CD4-positive, alpha-beta T cell (primary cell): ENCODE measurements at regions of chr11 and their contacts with region 1.

Region 1: DNA sequence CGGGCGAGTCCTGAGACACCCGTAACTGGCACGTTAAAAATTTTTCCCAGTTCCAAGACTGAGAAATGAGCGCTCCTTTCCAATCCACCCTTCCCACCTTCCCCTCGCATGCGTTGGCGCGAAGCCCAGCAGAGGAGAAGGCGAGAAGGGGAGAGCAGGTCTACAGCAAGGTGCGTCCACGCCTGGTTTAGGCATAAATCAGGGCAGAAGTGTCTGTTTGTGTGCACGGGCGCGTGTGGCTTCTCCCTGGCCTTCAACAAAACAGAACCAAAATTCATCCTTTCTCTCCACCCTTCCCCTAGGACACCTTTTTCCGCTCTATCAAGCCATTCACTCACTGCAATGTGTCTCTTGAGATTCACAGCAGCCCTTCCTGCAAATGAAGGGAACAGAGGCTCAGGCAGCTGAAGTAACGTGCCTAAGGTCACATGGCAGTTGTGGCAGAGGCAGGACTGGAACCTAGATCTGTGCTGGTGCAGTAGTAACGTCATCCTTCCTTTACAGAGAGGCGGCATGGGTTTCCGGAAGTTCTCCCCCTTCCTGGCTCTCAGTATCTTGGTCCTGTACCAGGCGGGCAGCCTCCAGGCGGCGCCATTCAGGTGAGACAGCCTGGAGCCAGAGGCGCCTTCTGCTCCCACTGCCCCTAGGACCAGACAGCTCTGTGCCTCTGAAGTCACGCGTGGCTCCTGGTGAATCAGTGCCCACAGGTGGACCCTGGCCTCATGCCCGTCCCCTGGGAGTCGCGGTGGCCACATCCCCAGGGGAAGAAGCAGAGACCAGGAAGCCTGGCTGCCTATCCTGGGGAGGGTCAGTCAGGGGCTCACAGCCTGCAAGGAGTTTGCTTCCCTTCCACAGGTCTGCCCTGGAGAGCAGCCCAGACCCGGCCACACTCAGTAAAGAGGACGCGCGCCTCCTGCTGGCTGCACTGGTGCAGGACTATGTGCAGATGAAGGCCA is 1.1 kb downstream of the CALCB start:
- DNase-seq: peak; percentile 71 to 88 (median 78)
- ATAC-seq: peak; percentile 93
- H3K4me3 ChIP-seq: peak overlapping the region; percentile 50
- H3K4me3 Mint-ChIP-seq: peak overlapping the region; percentile 88
- H3K27ac ChIP-seq: no peak overlapping the region
- H3K27ac Mint-ChIP-seq: no peak overlapping the region
- H3K4me1 ChIP-seq: peaks cover 25% of the 10 kb centered on the region
- H3K4me1 Mint-ChIP-seq: peaks cover 18% of the 10 kb centered on the region
- H3K27me3 ChIP-seq: peaks cover 22 to 23% of the 10 kb centered on the region in 2 experiments
- H3K27me3 Mint-ChIP-seq: peaks cover 39% of the 10 kb centered on the region
- CTCF ChIP-seq: peak; percentile 93

Region 2: DNA sequence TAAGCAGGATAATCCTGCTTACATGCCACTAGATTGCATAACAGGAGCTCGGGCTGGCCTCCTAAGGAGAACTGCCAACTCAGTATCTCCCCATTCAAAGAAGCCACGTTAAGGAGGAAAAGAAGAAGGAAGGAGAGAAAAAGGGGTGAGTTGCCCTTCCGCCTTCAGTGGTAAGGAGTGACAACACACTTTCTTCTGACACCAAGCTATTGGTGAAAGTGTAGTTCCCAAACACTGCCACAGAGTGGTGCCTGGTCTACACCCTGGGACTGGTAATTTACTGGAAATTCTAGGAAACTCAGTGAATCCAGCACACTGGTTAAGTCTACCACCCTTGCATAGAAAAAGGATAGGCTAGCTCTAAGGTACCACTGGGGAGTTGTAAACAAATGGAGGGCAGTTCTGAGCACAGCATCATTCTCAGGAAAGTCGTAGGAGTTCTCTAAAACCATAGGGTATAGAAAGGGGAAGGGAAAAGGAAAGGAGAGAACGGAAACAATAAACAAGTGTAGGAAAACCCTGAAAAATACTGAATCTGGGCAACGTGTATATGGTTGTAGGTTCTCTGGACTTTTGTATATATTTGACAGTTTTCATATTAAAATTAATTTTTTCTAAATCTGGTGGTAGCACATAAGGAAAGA is 773.7 kb before region 1 on chr11:
- CTCF ChIA-PET with region 1: no interaction called
- POLR2A ChIA-PET with region 1: no interaction called
- intact Hi-C with region 1: loop called in 1 of 2 experiments (anchors 5 kb)
- DNase-seq: peak in 13 of 14 experiments; percentile 13 to 68 (median 27)
- ATAC-seq: peak; percentile 94
- H3K4me3 ChIP-seq: no peak overlapping the region
- H3K4me3 Mint-ChIP-seq: no peak overlapping the region
- H3K27ac ChIP-seq: no peak overlapping the region
- H3K27ac Mint-ChIP-seq: no peak overlapping the region
- H3K4me1 ChIP-seq: peaks cover 5% of the 10 kb centered on the region
- H3K4me1 Mint-ChIP-seq: peaks cover 5% of the 10 kb centered on the region
- H3K27me3 ChIP-seq: no peaks in the 10 kb centered on the region
- H3K27me3 Mint-ChIP-seq: no peaks in the 10 kb centered on the region
- CTCF ChIP-seq: peak; percentile 60

Region 3: DNA sequence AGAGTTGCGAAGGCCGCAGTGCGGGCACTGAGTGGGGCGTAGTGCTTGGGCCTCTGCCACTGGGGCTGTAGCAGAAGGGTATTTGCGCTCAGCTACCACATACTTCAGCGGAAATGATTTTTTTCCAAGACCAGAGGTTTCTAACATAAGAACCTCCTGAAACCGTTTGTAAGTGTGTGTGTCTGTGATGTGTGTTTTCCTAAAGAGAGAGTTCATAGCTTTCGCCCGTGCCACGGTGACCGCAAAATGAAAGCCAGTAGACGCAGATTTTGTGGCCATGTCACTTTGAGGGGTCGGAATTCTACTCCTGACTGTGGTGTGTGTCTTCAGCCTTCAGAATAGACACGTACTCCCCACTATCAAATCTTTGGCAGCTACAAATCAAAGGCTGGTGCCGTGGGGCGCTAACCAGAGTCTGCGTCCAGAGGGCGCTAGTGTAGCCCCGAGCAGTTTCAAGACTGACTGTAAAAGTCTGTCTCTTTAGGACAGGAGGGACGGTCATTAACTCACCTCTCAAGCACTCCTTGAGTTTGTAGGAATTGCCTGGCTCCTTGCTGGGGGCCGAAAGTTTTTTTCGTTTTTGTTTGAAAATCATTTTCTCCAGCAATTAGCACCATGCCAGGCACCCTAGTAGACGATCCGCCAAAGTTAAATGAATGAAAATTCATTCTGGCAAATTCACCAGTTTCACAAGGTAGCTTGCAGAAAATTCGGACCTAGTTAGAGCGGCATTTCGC is 99.8 kb before region 1 on chr11:
- CTCF ChIA-PET with region 1: interaction called, 9 read pairs
- POLR2A ChIA-PET with region 1: no interaction called
- intact Hi-C with region 1: loop called in 1 of 2 experiments (anchors 5 kb)
- DNase-seq: peak; percentile 17 to 74 (median 55)
- ATAC-seq: peak; percentile 78
- H3K4me3 ChIP-seq: peak overlapping the region; percentile 48
- H3K4me3 Mint-ChIP-seq: peak overlapping the region; percentile 85
- H3K27ac ChIP-seq: no peak overlapping the region
- H3K27ac Mint-ChIP-seq: no peak overlapping the region
- H3K4me1 ChIP-seq: peaks cover 27% of the 10 kb centered on the region
- H3K4me1 Mint-ChIP-seq: peaks cover 35% of the 10 kb centered on the region
- H3K27me3 ChIP-seq: peaks cover 52 to 53% of the 10 kb centered on the region in 2 experiments
- H3K27me3 Mint-ChIP-seq: peaks cover 77% of the 10 kb centered on the region
- CTCF ChIP-seq: peak; percentile 66